Psoas muscle (tissue), 8 donors: ENCODE measurements at regions of chr1 and their contacts with region 1.

Region 1: DNA sequence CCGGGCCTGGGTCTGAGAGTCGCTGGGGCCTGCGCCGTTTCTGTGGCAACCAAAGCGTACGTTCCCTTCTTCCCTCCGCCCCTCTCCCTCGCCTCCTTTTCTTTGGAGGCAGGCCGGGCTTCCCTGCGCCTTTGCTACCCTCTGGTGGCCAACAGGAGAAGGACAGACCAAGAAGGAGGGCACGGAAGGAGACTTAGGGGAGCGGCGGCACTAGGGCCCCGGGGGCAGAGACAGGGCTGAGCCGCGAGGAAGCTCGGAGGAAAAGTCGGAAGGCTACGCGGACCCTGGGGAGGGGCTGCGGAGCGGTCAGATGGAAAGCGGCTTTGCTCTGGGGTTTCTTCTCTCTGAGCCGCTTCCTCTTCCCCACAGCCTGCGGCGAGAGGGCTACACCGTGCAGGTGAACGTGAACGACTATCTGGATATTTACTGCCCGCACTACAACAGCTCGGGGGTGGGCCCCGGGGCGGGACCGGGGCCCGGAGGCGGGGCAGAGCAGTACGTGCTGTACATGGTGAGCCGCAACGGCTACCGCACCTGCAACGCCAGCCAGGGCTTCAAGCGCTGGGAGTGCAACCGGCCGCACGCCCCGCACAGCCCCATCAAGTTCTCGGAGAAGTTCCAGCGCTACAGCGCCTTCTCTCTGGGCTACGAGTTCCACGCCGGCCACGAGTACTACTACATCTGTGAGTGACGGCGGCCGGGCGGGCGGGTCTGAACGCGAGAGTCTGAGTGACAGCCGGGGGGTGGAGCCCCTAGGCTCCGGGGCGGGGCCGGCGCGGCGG is 6.3 kb downstream of the EFNA3 start:
- DNase-seq: peak; percentile 93 to 95
- ATAC-seq: peak; percentile 88 to 92 (median 89)
- H3K4me3 ChIP-seq: peak overlapping the region; percentile 69
- H3K27ac ChIP-seq: peak overlapping the region; percentile 92
- H3K4me1 ChIP-seq: peaks cover 22% of the 10 kb centered on the region
- H3K27me3 ChIP-seq: peaks cover 0 to 41% (median 21%) of the 10 kb centered on the region in 3 donors
- CTCF ChIP-seq: peak; percentile 92

Region 2: GRCh38 chr1:154974063-154974807 is 110.7 kb before region 1 on chr1 and contains the start of gene CKS1B:
- intact Hi-C with region 1: loop called in 1 of 2 experiments (anchors 5 kb)
- DNase-seq: peak; percentile 97 to 98
- ATAC-seq: peak; percentile 86 to 89 (median 86)
- H3K4me3 ChIP-seq: peak within 1 kb of the TSS; percentile 84
- H3K27ac ChIP-seq: peak within 1 kb of the TSS; percentile 99
- H3K4me1 ChIP-seq: peaks cover 49% of the 10 kb centered on the region
- H3K27me3 ChIP-seq: no peaks in the 10 kb centered on the region
- CTCF ChIP-seq: no peak
- total RNA-seq, gene CKS1B: 5.5 to 13.8 (median 6.9) TPM

Region 3: DNA sequence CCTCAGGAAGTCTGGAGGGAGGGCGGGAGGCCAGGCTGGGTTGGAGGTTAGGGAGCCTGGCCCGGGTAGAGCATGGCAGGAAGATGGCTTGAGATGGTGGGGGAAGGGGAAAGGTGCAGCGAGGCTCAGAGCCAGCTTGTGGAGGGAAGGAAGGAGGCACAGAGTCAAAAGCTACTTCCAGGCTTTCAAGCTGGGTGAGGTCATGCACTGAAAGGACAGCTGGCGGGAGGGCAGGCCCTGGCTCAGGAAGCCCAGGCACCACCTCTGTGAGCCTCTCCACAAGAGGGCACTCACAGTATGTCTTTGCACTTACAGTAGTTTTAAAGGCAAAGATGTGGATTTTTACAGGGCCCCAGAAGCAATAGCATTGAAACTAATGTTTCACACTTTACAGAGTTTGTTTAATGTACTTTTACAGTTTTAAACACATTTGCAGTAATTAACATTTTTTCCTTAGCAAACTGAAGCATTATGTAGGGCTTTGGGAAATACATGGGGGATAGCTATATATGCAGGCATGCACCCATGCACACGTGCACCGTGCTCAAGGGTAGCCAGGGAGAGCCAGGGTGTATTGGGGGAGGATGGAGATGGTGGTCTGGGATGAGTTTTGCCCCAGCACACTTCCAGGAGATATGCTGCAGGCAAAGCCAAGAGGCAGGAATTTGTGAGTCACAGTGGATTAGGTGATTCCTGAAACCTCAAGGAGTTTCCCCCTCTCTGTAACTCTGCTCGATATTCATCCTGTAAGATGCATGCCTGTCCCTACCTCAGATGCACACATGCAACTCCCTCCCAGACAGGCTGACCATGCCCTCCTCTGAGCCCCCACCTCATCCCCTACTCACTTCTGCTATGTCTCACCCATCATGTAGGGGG is 39.9 kb before region 1 on chr1:
- intact Hi-C with region 1: loop called (anchors 1 to 5 kb)
- DNase-seq: peak; percentile 80 to 92
- ATAC-seq: peak; percentile 95 to 98 (median 97)
- H3K4me3 ChIP-seq: no peak overlapping the region
- H3K27ac ChIP-seq: peak overlapping the region; percentile 34
- H3K4me1 ChIP-seq: peaks cover 27% of the 10 kb centered on the region
- H3K27me3 ChIP-seq: no peaks in the 10 kb centered on the region
- CTCF ChIP-seq: peak; percentile 84